RWPE1 (cell line): ENCODE measurements at regions of chr13 and their contacts with region 1.

Region 1: DNA sequence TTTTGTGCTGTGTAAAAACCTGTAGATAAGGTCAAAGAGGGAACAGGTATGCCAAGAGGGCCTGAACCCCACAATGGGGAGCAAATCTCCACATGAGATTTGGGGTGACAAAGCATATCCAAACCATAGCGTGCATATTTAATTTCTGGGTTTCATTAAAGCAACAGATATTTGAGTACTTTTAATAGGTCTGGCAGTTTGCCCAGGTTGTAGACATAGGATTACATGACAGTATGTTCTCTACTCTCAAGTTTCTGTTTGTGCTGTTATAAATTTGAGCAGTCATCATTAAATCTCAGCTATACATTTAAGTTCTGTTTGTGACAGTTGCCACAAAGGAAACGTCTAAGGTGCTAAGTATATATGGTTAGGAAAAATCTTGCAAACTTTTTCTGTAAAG is 236.4 kb downstream of the ATP8A2 start:
- DNase-seq: no peak
- H3K27ac ChIP-seq: no peak overlapping the region
- CTCF ChIP-seq: no peak

Region 2: GRCh38 chr13:25455146-25455545 is 153.0 kb before region 1 on chr13:
- CTCF ChIA-PET with region 1: no interaction called
- POLR2A ChIA-PET with region 1: no interaction called
- DNase-seq: no peak
- H3K27ac ChIP-seq: no peak overlapping the region
- CTCF ChIP-seq: no peak

Region 3: DNA sequence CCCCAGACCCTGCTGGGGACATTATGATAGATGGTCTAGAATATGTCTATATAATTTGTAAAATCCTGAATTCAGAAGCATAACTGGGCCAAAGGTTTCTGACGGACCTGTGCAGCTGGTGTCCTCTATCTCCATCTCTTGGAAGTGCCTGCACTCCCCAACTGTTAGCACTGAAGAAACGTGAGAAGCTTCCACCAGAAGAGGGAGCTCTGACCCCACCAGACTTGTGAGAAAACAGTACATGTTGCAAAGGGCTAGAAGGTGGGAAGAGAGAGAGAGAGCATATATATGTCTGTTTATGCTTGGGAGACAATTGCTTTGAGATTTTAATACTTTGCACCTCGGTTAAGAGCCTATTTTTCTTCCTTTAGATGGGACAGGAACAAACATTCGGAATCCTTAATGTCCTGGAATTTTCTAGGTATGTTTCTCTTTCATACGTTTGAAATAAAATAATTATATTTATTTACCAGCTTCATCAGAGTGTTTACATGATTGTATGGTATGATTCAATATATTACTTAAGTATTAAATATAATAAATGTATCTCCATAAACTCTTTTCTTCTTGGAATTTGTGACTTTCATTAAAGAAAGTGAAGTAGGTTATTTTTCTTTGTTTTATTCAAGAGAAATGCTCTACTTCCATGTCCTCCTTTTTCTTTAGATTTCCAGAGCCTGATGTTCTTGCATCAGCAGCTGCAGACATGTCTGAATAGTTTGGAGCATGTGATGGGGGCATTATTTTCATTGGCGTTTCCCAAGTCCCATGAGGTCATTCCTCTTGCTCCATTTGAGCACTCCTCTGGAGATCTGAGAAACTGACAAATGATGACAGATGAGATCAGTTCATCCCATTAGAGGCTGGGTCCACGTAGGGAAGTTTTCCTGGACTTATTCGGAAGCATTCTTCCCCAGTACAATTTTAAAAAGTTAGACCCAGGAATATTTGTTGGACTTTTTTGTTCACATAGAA is 33.5 kb before region 1 on chr13:
- CTCF ChIA-PET with region 1: interaction called, 10 read pairs
- POLR2A ChIA-PET with region 1: no interaction called
- DNase-seq: peak; percentile 51
- H3K27ac ChIP-seq: no peak overlapping the region
- CTCF ChIP-seq: peak; percentile 88

Region 4: GRCh38 chr13:25625414-25625813 is 17.2 kb after region 1 on chr13:
- CTCF ChIA-PET with region 1: no interaction called
- POLR2A ChIA-PET with region 1: no interaction called
- DNase-seq: no peak
- H3K27ac ChIP-seq: no peak overlapping the region
- CTCF ChIP-seq: no peak